MCF 10A (cell line): ENCODE measurements at regions of chr19 and their contacts with region 1.

Region 1: DNA sequence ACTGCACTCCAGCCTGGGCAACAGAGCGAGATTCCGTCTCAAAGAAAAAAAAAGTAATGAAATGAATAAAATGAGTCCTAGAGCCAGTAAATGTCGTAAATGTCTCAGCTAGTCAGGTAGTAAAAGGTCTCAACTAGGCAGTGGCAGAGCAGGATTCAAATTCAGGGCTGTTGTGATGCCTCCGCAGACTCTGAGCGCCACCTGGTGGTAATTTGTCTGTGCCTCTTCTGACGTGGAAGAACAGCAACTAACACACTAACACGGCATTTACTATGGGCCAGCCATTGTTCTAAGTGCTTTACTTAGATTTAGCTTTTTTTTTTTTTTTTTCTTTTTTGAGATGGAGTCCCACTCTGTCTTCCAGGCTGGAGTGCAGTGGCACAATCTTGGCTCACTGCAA is 30.2 kb downstream of the CYP2F1 start:
- DNase-seq: peak; percentile 84
- H3K4me3 Mint-ChIP-seq: no peak overlapping the region
- H3K27ac Mint-ChIP-seq: no peak overlapping the region
- H3K4me1 Mint-ChIP-seq: no peaks in the 10 kb centered on the region
- H3K27me3 Mint-ChIP-seq: peaks cover 36% of the 10 kb centered on the region
- CTCF ChIP-seq: peak; percentile 79

Region 2: DNA sequence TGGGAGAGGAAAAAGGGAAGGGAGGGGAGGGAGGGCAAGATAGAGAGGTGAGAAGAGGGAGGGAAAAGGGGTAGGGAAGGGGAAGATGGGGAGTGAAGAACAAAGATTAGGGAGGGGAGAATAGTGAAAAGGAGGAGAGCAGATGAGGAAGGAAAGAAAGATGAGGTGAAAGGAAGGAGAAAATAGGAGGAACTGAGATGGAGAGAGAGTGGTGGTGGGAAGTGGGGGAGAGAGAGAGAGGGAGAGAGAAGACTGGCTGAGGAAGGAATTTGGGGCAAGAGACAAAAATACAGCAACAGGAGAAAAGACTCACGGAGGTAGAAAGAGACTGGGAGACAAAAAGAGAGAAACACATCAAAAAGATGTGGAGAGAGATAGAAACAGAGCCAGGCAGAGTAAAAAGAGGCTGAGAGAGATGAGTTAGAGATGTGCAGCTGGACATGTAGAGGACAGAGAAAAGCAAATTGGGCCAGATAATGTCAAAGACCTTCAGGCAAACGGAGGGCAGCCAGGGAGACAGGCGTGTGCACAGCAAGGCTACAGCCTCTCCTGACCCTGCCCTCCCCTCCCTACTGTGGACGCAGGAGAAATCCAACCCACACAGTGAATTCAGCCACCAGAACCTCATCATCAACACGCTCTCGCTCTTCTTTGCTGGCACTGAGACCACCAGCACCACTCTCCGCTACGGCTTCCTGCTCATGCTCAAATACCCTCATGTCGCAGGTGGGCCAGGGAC is 202.8 kb before region 1 on chr19:
- CTCF ChIA-PET with region 1: no interaction called
- POLR2A ChIA-PET with region 1: no interaction called
- intact Hi-C with region 1: no loop called
- DNase-seq: no peak
- H3K4me3 Mint-ChIP-seq: no peak overlapping the region
- H3K27ac Mint-ChIP-seq: no peak overlapping the region
- H3K4me1 Mint-ChIP-seq: no peaks in the 10 kb centered on the region
- H3K27me3 Mint-ChIP-seq: peaks cover 34% of the 10 kb centered on the region
- CTCF ChIP-seq: no peak

Region 3: GRCh38 chr19:40974633-40975037 is 169.8 kb before region 1 on chr19:
- CTCF ChIA-PET with region 1: interaction called, 25 read pairs
- POLR2A ChIA-PET with region 1: interaction called, 3 read pairs
- intact Hi-C with region 1: loop called (anchors 2 kb)
- DNase-seq: peak; percentile 78
- H3K4me3 Mint-ChIP-seq: no peak overlapping the region
- H3K27ac Mint-ChIP-seq: no peak overlapping the region
- H3K4me1 Mint-ChIP-seq: no peaks in the 10 kb centered on the region
- H3K27me3 Mint-ChIP-seq: peaks cover 74% of the 10 kb centered on the region
- CTCF ChIP-seq: peak; percentile 84

Region 4: GRCh38 chr19:41123716-41124294 is 20.6 kb before region 1 on chr19:
- CTCF ChIA-PET with region 1: interaction called, 6 read pairs
- POLR2A ChIA-PET with region 1: no interaction called
- intact Hi-C with region 1: loop called (anchors 1 kb)
- DNase-seq: no peak
- H3K4me3 Mint-ChIP-seq: no peak overlapping the region
- H3K27ac Mint-ChIP-seq: no peak overlapping the region
- H3K4me1 Mint-ChIP-seq: peaks cover 12% of the 10 kb centered on the region
- H3K27me3 Mint-ChIP-seq: peaks cover 8% of the 10 kb centered on the region
- CTCF ChIP-seq: no peak

Region 5: DNA sequence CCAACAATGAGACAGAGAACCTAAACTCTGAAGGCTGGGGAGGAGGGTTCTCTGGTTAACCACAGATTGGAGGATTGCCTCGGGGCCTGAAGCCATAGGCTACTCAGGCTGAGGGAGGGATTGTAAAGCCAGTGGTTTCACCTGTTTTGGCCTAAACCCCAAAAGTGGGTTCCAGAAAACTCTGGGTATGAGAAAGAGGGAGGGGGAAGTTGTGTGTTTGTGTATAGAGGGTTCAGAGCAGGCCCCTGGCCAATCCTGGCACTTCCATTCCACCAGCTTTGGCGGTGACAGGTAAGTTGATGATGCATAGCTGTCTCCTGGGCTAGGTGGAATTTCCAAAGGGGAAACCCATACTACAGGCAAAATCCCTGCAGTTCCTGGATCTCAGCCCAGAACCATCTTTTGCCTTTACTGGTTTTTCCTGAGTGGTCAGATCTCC is 152.0 kb after region 1 on chr19:
- CTCF ChIA-PET with region 1: no interaction called
- POLR2A ChIA-PET with region 1: no interaction called
- intact Hi-C with region 1: no loop called
- DNase-seq: peak; percentile 6
- H3K4me3 Mint-ChIP-seq: no peak overlapping the region
- H3K27ac Mint-ChIP-seq: peak overlapping the region; percentile 75
- H3K4me1 Mint-ChIP-seq: no peaks in the 10 kb centered on the region
- H3K27me3 Mint-ChIP-seq: no peaks in the 10 kb centered on the region
- CTCF ChIP-seq: no peak